ENCODE measurements at regions of chr19 and their contacts with region 1.

Region 1: DNA sequence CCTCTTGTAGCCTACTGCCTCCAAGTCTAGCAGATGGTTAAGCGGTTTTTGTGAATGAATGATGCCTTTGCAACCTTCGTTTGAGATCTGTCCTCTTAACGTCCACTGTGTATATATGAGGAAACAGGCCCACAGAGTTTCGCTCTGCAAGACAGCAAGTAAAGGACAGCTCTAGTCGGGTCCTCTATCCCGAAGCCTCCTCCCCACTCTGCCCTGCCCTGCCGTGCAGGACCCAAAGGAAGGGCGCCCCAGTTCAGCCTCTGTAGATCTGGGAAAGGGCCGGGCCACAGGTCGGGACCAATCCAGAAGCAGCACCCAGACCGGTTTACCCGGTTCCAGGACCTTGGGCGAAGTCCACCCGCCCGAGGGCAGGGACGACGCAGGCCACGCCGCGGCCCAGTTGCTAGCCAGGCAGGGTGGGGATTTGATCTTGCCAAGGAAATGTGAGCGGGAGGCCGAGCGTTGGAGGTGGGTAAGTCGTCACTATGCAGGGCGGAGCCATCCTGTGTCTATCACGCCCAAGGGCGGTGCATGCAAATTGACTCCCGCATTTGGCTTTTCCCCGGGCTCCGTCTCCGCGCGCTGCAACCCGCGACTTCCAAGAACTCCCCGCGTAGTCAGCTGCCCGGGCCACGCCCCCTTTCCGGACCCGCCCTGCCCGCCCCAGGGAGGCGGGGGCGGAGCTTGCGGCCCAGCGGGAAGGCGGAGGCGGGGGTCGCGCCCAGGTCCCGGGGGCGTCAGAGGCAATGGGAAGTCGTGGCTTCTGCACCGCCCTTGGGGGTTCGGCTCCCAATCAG is 12.5 kb downstream of the IER2 start:
- DNase-seq: peak; percentile 89
- H3K27ac ChIP-seq: peak overlapping the region; percentile 100
- CTCF ChIP-seq: no peak

Region 2: GRCh38 chr19:13151605-13152395 is 10.9 kb before region 1 on chr19:
- CTCF ChIA-PET with region 1: interaction called, 3 read pairs
- POLR2A ChIA-PET with region 1: interaction called, 18 read pairs
- DNase-seq: peak; percentile 99
- H3K27ac ChIP-seq: peak overlapping the region; percentile 100
- CTCF ChIP-seq: no peak

Measured in RWPE1 (cell line).